ENCODE measurements at regions of chr5 and their contacts with region 1.

Region 1: GRCh38 chr5:150217873-150218692 is 28.2 kb downstream of the SLC6A7 start:
- DNase-seq: peak; percentile 91
- H3K27ac ChIP-seq: no peak overlapping the region
- CTCF ChIP-seq: peak; percentile 95

Region 2: GRCh38 chr5:149162401-149163084 is 1055.5 kb before region 1 on chr5:
- CTCF ChIA-PET with region 1: no interaction called
- POLR2A ChIA-PET with region 1: no interaction called
- DNase-seq: peak; percentile 72
- H3K27ac ChIP-seq: peak overlapping the region; percentile 9; the same call in 1 of the 2 replicates
- CTCF ChIP-seq: no peak

Region 3: DNA sequence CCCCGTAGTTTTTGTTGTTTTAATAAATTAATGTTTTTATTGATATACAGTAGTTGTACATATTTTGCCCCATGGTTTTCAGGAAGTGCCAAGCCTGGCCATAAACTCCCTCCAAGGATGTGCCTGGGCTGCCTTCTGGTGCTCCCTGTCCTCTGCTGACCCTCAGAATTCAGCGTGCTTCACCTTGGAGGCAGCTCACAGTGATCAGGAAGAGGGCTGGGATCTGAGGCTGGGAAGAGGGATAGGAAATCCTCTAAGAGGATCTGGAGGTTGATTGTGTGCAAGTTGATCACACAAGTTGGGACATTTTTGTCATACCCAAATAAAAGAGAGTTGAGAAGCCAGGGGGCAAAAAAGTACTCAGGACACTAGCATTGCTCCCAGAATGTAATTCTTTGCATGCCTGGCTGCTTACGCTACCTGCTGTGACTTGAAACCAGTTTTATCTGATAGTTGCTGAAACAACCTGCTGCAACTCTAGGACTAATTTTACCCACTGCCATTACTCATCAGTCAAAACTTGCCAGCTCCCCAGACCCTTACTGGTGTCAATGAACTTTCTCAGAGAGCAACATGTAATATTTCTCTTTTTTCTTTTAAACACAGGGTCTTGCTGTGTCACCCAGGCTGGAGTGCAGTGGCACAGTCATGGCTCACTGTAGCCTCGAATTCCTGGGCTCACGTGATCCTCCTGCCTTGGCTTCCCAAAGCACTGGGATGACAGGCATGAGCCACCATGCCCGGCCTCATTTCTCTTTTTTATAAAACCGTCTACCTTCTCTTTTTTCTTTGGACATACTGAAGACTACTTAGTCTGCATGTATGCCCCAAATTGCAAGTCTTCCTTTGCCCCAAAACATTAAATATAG is 302.5 kb before region 1 on chr5:
- CTCF ChIA-PET with region 1: no interaction called
- POLR2A ChIA-PET with region 1: no interaction called
- DNase-seq: peak; percentile 88
- H3K27ac ChIP-seq: peak overlapping the region; percentile 83
- CTCF ChIP-seq: no peak

Region 4: DNA sequence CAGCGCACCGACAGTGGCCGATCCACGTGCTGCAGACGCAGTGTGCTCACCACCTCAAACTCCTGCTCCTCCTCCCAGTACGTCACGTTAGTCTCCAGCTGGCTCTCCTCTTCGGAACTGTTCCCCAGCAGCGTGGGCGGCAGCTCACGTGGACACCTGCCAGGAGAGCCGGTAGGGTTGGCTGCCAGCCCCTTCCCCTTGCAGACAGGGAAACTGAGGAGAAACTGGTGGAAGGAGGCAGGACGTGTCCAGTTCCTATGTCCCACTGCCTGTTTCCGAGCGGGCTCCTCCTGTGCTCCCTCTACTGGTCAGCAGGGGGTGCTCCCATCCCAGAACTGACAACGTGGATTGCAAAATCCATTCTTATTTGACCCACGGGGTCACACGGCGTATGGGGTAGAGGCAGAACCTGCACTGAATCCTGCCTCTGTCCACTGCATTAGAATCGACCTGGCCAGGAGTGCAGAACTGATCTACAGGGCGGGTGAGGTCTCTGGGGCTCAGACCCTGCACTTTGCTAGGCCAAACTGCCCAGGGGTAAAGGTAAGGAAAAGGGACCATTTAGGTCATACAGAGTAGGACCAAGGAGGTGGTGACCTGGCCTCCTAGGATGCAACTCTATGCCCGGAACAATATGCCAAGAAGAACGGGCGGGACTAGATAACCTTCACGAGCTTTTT is 88.1 kb before region 1 on chr5:
- CTCF ChIA-PET with region 1: interaction called, 16 read pairs
- POLR2A ChIA-PET with region 1: no interaction called
- DNase-seq: peak; percentile 86
- H3K27ac ChIP-seq: no peak overlapping the region; the same call in 1 of the 2 replicates
- CTCF ChIP-seq: peak; percentile 95

Region 5: DNA sequence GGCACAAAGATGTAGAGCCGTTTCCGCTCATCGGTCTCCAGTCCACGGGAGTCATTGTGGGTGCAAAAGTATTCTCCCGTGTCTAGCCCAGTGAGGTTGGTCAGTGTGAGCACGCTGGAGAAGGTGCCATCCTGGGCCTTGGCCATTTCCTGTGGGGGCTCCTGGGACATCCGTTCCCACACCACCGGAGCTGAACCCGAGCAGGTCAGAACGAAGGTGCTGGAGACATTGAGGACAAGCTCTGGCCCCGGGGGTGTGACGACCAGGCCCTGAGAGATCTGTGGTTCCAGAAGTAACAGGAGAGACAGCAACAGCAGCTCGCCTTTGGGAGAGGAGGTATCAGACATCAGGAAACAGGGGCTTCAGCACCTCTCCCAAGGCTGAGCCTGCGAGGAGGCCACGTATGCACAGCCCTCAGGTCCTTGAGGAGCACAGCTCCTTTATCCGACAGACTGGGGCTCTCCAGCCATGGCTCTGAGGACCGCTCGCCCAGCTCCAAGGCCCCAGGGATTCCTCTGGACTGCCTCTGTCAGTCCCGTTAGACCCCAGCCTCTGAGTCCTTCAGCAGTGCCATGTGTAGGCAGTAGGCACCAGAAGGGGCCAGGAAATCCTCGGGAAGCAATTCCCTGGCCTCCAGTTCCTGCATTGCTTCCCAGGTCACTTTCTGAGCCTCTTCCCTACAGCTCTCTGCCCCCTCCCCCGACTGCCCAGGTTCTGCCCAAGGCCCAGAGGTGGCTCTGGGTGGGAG is 82.4 kb before region 1 on chr5:
- CTCF ChIA-PET with region 1: interaction called, 16 read pairs
- POLR2A ChIA-PET with region 1: no interaction called
- DNase-seq: no peak
- H3K27ac ChIP-seq: no peak overlapping the region; the same call in 1 of the 2 replicates
- CTCF ChIP-seq: no peak

Region 6: GRCh38 chr5:150175076-150175935 is 42.8 kb before region 1 on chr5:
- CTCF ChIA-PET with region 1: interaction called, 10 read pairs
- POLR2A ChIA-PET with region 1: no interaction called
- DNase-seq: peak; percentile 55
- H3K27ac ChIP-seq: no peak overlapping the region
- CTCF ChIP-seq: no peak; the same call in 1 of the 2 replicates

Region 7: DNA sequence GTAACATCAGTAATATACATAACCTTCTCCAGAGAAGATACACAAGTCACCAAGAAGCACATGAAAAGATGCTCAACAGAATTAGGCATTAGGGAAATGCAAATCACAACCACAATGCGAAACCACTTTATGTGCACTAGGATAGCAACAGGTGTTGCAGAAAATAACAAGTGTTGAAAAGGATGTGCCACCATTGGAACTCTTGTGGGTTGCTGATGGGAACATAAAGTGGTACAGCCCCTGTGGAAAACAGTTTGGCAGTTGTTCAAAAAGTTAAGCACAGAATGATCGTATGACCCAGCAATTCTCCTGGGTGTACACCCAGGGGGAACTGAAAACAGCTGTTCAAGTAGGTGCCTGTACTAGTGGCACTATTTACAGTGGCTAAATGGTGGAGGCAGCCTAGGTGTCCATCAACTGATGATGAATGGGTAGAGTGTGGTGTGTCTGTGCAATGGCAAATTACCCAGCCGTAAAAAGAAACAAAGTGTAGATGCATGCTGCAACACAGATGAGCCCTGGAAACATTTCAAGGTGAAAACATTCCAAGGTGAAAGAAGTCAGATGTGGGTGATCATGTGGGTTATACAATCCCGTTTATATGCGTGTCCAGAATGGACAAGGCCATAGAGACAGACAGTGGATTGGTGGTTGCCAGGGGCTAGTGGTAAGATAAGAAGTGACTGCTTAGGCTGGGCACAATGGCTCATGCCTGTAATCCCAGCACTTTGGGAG is 978.6 kb after region 1 on chr5:
- CTCF ChIA-PET with region 1: no interaction called
- POLR2A ChIA-PET with region 1: no interaction called
- DNase-seq: no peak
- H3K27ac ChIP-seq: no peak overlapping the region
- CTCF ChIP-seq: no peak